IMR-90 (cell line): ENCODE measurements at regions of chr12 and their contacts with region 1.

Region 1: DNA sequence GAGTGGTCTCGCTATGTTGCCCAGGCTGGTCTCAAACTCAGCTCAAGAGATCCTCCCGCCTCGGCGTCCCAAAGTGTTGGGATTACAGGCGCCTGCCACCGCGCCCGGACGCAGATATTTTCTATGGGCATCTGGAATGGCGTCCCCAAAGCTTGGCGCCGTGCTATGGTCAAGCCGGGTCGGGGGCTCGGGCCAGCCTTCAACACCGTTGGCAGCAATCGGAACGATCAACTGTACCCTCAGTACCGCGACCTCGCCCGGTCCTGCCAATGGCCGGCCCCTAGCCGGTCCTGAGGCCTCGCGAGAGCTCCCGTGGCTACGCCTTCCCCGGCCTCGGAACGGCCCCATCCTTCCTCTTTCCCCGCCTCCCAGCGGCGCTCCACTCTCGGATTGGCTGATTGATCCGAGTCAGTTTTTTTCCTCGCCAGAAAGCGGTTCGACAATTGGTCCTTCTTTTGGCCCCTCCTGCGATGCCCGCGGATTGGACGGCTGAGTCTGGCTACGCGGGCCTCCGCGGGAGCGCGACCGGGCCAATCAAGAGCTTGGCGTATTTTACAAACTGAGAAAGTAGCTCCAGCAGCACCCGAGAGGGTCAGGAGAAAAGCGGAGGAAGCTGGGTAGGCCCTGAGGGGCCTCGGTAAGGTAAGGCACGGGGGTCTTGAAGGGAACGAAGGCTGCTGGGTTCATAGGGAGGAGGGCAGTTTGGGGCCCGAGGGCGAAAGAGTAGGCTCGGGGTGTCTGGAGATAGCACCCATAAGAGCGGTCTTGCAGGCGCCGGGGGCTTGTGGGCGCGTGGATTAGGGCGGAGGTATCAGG is at the start of gene TROAP:
- DNase-seq: peak; percentile 97
- ATAC-seq: peak; percentile 100
- H3K4me3 ChIP-seq: peak within 1 kb of the TSS; percentile 82
- H3K27ac ChIP-seq: peak within 1 kb of the TSS; percentile 72
- H3K4me1 ChIP-seq: peaks cover 9% of the 10 kb centered on the region; the same call in 1 of the 2 replicates
- H3K27me3 ChIP-seq: no peaks in the 10 kb centered on the region
- CTCF ChIP-seq: no peak
- POLR2A ChIP-seq: no peak; the same call in 1 of the 2 replicates
- RAD21 ChIP-seq: no peak
- total RNA-seq, gene TROAP: 15.6 and 21.5 TPM in 2 replicates

Region 2: DNA sequence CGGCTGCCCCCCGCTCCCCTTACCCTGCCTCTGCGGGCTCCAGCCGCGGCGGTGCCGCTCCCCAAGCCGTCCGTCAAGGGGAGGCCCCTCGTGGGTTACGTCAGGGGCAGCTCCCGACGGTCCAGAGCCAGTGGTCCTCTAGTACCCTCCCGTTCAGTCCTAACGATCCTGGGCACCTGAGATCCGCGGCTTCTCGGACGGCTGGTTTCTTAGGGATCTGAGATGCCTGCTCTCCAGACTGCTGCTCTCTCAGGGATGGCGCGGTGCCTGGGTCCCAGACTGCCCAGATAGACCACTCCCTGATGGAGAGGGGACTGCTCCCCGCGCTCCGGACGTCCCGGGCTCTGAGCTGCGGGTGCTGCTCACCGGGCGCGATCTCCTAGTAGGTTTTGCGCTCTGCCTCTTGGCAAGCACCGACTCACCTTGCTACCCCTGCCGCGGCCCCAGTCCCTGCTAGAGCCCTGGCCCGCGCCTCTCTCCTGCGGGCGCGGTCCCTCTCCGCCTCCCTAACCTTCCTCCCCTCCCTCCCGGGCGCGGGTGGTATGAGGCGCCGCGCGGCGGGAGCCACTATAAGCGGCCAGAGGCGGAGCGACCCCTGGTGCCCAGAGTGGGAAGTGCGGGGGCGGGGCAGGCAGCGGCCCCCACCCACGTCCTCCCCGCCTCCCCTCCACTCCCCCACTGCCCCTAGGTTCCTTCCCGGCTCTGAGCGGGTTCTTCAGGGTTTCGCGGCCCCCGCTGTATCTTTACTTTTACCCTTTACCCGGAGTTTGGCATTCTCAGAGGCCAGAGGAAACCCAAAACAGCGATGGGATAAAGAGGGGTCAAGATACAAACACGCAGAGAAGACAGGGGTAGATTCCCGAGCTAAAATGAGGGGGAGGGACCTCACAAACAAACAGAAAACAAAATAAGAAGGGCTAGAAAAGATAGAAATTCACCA is 14.0 kb after region 1 on chr12 and contains the start of gene C1QL4:
- CTCF ChIA-PET with region 1: interaction called, 10 read pairs
- POLR2A ChIA-PET with region 1: interaction called, 4 read pairs
- dilution Hi-C with region 1: no loop called
- in situ Hi-C with region 1: no loop called
- intact Hi-C with region 1: no loop called
- DNase-seq: peak; percentile 52
- ATAC-seq: peak; percentile 97
- H3K4me3 ChIP-seq: peak within 1 kb of the TSS; percentile 57
- H3K27ac ChIP-seq: no peak within 1 kb of the TSS
- H3K4me1 ChIP-seq: no peaks in the 10 kb centered on the region
- H3K27me3 ChIP-seq: peaks cover 70% of the 10 kb centered on the region
- CTCF ChIP-seq: peak; percentile 82
- POLR2A ChIP-seq: no peak
- RAD21 ChIP-seq: peak; percentile 33
- total RNA-seq, gene C1QL4: 0.18 and 0.28 TPM in 2 replicates